Activated naive CD4-positive, alpha-beta T cell treated with anti-CD3 and anti-CD28 coated beads for 36 hours (primary cell): ENCODE measurements at regions of chrX and their contacts with region 1.

Region 1: DNA sequence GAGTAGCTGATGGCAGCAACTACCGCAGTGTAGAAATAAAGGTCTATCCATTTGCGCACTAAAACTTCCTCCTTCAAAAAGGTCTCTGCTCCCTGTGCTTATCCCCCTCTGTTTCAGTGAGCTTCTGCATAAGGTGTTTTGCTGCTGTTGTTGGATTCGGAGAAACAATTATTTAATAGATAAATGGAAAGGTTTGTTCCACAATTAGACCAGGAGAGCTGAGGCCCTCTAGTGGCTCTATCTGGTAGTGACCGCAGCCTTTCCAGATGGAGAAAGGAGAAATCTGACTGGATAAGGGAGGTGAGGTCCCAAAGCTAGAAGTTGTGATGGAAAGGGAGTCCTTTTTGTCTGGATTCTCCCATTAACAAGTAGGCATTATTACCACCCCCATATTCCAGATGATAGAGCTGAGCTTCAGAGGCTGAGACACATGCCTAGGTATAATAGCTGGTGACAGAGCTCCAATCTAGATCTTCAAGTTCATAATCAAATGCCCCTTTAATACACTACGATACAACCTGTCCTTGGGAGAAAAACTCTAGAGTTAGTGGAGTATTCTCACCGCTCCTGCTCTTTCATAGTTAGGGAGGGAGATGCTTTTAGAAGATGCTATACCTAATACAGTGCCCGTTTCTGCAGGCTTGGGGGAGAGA is 5.1 kb upstream of the GABRQ start:
- DNase-seq: peak; percentile 64
- H3K4me3 Mint-ChIP-seq: no peak overlapping the region
- H3K27ac Mint-ChIP-seq: no peak overlapping the region
- H3K4me1 Mint-ChIP-seq: no peaks in the 10 kb centered on the region
- H3K27me3 Mint-ChIP-seq: peaks cover 17% of the 10 kb centered on the region

Region 2: DNA sequence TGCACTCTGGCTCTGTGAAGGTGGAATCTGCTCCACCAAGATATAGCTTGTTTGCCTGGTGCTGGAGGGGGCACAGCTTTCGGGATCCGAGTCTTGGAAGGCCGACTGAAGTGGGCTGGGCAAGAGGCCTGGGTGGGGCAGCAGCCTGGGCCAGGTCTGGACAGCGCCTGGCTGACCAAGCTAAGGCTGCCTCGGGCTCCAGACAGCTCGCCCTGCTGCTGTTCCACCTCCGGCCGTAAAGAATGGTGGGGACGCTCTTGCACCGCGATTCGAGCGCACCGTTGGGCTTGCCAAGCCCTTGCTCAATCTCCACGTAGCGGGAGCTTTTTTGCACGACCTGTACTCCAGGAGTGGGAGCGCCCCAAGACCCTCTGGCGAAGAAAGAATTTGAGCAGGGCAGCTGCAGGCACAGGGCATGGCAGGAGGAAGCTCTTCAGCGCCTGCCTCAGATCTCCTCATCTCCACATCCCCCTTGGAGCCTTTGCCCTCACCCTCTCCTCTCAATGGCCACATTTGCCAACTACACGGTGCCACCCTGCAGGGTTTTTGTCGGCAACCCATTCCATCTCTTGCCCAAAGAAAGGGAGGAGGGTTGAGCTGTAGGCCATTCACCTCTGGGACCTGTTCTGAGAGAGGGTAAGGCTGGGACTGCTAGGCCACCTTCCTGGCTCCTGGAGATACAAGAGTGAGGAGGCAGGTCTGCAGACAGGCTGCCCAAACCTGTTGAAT is 879.1 kb before region 1 on chrX:
- CTCF ChIA-PET with region 1: interaction called, 6 read pairs
- intact Hi-C with region 1: loop called (anchors 1 kb)
- DNase-seq: peak; percentile 19
- H3K4me3 Mint-ChIP-seq: no peak overlapping the region
- H3K27ac Mint-ChIP-seq: no peak overlapping the region
- H3K4me1 Mint-ChIP-seq: no peaks in the 10 kb centered on the region
- H3K27me3 Mint-ChIP-seq: peaks cover 10% of the 10 kb centered on the region

Region 3: GRCh38 chrX:152445926-152446325 is 186.6 kb before region 1 on chrX:
- CTCF ChIA-PET with region 1: no interaction called
- intact Hi-C with region 1: no loop called
- DNase-seq: no peak
- H3K4me3 Mint-ChIP-seq: no peak overlapping the region
- H3K27ac Mint-ChIP-seq: no peak overlapping the region
- H3K4me1 Mint-ChIP-seq: no peaks in the 10 kb centered on the region
- H3K27me3 Mint-ChIP-seq: no peaks in the 10 kb centered on the region

Region 4: GRCh38 chrX:152817078-152817764 is 184.7 kb after region 1 on chrX:
- CTCF ChIA-PET with region 1: interaction called, 3 read pairs
- intact Hi-C with region 1: loop called (anchors 2 kb)
- DNase-seq: peak; percentile 44
- H3K4me3 Mint-ChIP-seq: no peak overlapping the region
- H3K27ac Mint-ChIP-seq: no peak overlapping the region
- H3K4me1 Mint-ChIP-seq: no peaks in the 10 kb centered on the region
- H3K27me3 Mint-ChIP-seq: peaks cover 3% of the 10 kb centered on the region

Region 5: DNA sequence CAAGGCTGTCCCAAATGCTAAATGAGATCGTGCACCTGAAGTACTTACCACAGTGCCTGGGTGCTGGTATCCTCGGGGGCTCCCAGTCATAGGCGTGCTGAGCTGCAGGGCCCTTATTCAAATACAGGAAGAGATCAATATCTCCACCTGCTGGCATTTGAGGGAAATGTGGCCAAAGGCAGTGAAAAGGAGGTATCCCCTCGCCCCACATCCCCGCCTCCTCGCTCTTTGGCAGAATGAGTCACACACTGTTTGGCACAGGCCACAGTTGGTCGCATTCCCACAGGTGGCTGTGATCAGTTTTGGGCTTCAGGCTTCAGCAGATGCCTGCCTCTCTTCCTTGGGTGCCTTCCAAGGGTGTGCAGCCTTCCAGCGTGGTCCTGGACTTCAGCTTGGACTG is 293.7 kb after region 1 on chrX:
- CTCF ChIA-PET with region 1: no interaction called
- intact Hi-C with region 1: loop called (anchors 10 kb)
- DNase-seq: peak; percentile 70
- H3K4me3 Mint-ChIP-seq: no peak overlapping the region
- H3K27ac Mint-ChIP-seq: no peak overlapping the region
- H3K4me1 Mint-ChIP-seq: peaks cover 6% of the 10 kb centered on the region
- H3K27me3 Mint-ChIP-seq: no peaks in the 10 kb centered on the region